HCT116 (cell line): ENCODE measurements at regions of chr2 and their contacts with region 1.

Region 1: DNA sequence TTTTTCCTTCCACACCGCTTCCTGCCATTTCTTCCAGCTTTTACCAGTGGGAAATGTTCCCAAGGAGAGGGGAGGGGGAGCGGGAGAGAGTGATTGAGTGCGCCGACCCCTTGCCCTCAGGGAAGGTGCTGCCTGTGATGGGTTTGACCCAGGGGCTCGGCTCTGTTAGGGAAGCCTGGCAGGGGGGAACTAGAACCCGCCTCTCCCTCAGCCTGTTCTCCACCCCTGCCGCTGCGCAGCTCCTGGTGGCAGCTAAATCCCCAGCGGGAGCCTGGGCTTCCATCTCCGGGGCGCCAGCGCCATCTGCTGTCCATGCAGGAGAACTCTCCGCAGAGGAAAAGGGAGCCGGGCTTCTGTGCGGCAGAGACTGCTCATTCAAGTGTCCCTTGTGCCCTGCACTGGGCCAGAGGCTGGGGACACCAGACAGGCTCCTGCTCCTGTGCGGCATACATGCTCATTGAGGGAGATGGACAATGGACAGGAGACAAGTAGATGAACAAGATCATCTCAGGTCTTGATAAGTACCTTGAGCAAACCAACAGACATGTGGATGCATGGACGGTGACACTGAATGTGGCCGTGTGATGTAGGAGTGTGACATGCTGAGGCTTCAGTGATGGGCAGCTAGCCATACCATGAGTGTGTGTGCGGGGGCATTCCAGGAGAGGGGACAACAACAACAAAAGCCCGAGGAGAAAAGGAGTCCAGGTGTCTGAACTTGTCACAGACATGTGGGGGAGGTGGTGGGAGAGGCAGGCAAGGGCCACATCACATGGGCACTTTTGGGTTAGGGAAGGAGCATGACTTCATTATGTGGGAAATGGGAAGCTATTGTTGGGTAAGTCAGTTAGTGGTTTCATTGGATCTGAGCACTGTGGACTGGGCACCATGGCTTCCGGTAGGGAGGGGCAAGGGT is 13.3 kb downstream of the CHPF start:
- DNase-seq: peak; percentile 71
- ATAC-seq: peak; percentile 95
- H3K4me3 ChIP-seq: no peak overlapping the region
- H3K27ac ChIP-seq: no peak overlapping the region
- H3K4me1 ChIP-seq: peaks cover 13 to 38% of the 10 kb centered on the region in 2 experiments; a peak in 3 of 4 replicates
- H3K27me3 ChIP-seq: no peaks in the 10 kb centered on the region
- CTCF ChIP-seq: peak in 2 of 3 experiments; percentile 95 to 97; a peak in 4 of 6 replicates
- POLR2A ChIP-seq: no peak
- RAD21 ChIP-seq: no peak

Region 2: GRCh38 chr2:219177552-219178376 is 352.5 kb before region 1 on chr2 and contains the start of gene RETREG2:
- CTCF ChIA-PET with region 1: no interaction called
- POLR2A ChIA-PET with region 1: no interaction called
- RAD21 ChIA-PET with region 1: no interaction called
- intact Hi-C with region 1: loop called (anchors 10 kb)
- DNase-seq: peak; percentile 84
- ATAC-seq: peak; percentile 68
- H3K4me3 ChIP-seq: peak within 1 kb of the TSS; percentile 87 to 93
- H3K27ac ChIP-seq: peak within 1 kb of the TSS; percentile 97
- H3K4me1 ChIP-seq: peaks cover 10 to 27% of the 10 kb centered on the region in 2 experiments
- H3K27me3 ChIP-seq: no peaks in the 10 kb centered on the region
- CTCF ChIP-seq: peak in 1 of 3 experiments; percentile 28; a peak in 1 of 6 replicates
- POLR2A ChIP-seq: peak; percentile 85
- RAD21 ChIP-seq: no peak
- total RNA-seq, gene RETREG2: 63.7 TPM

Region 3: DNA sequence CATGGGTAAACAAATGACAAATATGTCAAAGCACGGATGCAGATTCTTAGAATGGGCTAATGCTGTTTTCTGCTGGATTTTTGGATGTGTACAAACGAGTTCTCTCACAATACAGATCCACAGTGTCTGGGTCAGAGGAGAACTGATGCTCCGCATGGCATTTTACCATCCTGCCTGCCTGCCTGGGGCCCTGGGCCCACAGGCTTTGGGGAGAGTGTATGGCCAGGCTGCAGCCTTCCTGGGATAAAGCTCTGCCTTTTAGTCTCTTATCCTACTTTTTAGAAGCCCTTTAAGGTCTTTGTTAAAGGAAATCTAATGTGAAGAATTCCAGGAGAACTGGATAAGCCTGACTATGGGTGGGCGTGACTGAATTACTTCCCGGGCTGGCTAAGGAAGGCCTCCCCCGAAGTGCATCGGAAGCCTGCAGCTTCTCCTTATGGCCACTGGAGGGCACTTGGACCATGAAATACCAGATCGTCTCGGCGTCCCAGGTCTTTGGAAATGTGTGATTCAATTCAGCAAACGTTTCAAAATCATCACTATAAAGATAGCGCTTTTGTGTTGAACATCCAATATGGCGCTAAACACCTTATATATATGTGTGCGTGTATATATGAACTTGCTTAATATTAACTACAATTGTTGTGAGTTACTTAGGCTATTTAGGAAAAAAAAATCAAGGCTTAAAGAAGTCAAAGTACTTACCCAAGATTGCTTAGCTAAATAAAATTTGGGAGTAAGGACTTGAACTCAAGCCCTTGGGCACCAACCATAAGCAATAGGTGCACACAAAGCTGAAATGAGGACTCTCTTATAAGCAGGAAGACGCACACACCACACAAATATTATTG is 127.4 kb before region 1 on chr2:
- CTCF ChIA-PET with region 1: interaction called, 109 read pairs
- POLR2A ChIA-PET with region 1: no interaction called
- RAD21 ChIA-PET with region 1: interaction called, 17 to 20 read pairs
- intact Hi-C with region 1: loop called (anchors 1 kb)
- DNase-seq: peak; percentile 79
- ATAC-seq: peak; percentile 91
- H3K4me3 ChIP-seq: no peak overlapping the region
- H3K27ac ChIP-seq: no peak overlapping the region; the same call in 1 of the 2 replicates
- H3K4me1 ChIP-seq: peaks cover 18 to 55% of the 10 kb centered on the region in 2 experiments
- H3K27me3 ChIP-seq: no peaks in the 10 kb centered on the region
- CTCF ChIP-seq: peak; percentile 91 to 98 (median 94)
- POLR2A ChIP-seq: no peak
- RAD21 ChIP-seq: peak; percentile 98

Region 4: DNA sequence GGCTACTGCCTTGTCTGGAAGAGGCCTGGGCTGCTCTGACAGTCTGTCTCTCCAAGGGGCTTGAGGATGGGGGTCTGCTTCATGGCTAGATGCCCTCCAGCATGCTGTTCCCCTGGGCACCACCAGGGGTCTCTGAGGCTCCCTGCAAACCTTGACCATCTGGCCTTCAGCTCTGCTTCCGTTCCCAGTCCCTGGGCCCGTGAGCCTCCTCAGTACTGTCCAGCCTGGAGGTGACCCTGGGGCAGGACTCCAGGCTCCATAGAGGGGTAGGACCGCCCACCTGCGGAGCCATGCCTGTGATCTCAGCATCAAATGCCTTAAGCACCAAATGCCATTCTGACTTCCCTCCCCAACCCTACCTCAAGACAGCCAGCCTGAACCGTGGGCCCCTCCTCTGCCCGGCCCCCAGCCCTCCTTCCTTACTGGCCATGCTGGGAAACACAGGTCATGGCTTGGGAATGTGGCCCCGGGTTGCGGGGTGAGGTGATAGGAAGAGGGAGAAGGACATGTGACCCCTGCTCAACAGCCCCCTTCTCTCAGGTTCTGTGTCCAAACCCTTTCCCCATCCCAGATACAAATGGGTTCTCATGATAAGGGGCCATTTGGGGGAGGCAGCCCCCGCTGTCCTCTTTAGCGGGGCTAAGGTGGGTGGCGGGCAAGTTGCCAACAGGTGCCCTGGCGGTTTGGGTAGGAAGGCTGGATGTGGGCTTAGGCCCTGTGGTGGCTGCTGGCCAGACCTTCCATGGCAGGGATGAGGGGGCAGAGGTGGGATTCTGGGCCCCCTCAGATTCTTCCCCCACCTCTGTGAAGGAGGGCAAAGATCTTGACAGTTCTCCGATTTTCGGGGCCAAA is 70.6 kb before region 1 on chr2:
- CTCF ChIA-PET with region 1: interaction called, 15 read pairs
- POLR2A ChIA-PET with region 1: no interaction called
- RAD21 ChIA-PET with region 1: interaction called, 5 to 8 read pairs
- intact Hi-C with region 1: loop called (anchors 1 kb)
- DNase-seq: no peak
- ATAC-seq: peak; percentile 85
- H3K4me3 ChIP-seq: no peak overlapping the region
- H3K27ac ChIP-seq: no peak overlapping the region
- H3K4me1 ChIP-seq: peaks cover 0 to 37% of the 10 kb centered on the region in 2 experiments; a peak in 2 of 4 replicates
- H3K27me3 ChIP-seq: no peaks in the 10 kb centered on the region
- CTCF ChIP-seq: peak in 2 of 3 experiments; percentile 90 to 91; a peak in 4 of 6 replicates
- POLR2A ChIP-seq: no peak
- RAD21 ChIP-seq: no peak

Region 5: GRCh38 chr2:219498280-219499057 is 31.8 kb before region 1 on chr2 and contains the start of gene GMPPA:
- CTCF ChIA-PET with region 1: interaction called, 103 read pairs
- POLR2A ChIA-PET with region 1: interaction called, 9 read pairs
- RAD21 ChIA-PET with region 1: interaction called, 12 to 18 read pairs
- intact Hi-C with region 1: loop called (anchors 1 kb)
- DNase-seq: peak; percentile 99
- ATAC-seq: peak; percentile 85
- H3K4me3 ChIP-seq: peak within 1 kb of the TSS; percentile 75 to 91
- H3K27ac ChIP-seq: peak within 1 kb of the TSS; percentile 98
- H3K4me1 ChIP-seq: peaks cover 24 to 54% of the 10 kb centered on the region in 2 experiments
- H3K27me3 ChIP-seq: no peaks in the 10 kb centered on the region
- CTCF ChIP-seq: 0 out of 6 replicates have a peak, but pooled peaks of 1 of the 3 experiments have one; percentile 5
- POLR2A ChIP-seq: peak; percentile 58
- RAD21 ChIP-seq: no peak
- total RNA-seq, gene GMPPA: 71.8 TPM

Region 6: GRCh38 chr2:219765231-219765911 is 235.1 kb after region 1 on chr2:
- CTCF ChIA-PET with region 1: no interaction called
- POLR2A ChIA-PET with region 1: no interaction called
- RAD21 ChIA-PET with region 1: no interaction called
- intact Hi-C with region 1: no loop called
- DNase-seq: no peak
- ATAC-seq: no peak
- H3K4me3 ChIP-seq: no peak overlapping the region
- H3K27ac ChIP-seq: no peak overlapping the region
- H3K4me1 ChIP-seq: no peaks in the 10 kb centered on the region
- H3K27me3 ChIP-seq: no peaks in the 10 kb centered on the region
- CTCF ChIP-seq: no peak
- POLR2A ChIP-seq: no peak
- RAD21 ChIP-seq: no peak